Dorsolateral prefrontal cortex (tissue), 120 donors: ENCODE measurements at regions of chr16 and their contacts with region 1.

Region 1: GRCh38 chr16:72099377-72099818 is 5.8 kb downstream of the DHX38 start:
- DNase-seq: peak in 3 of 10 donors; percentile 28 to 63 (median 48)
- H3K4me3 ChIP-seq: no peak overlapping the region
- H3K27ac ChIP-seq: no peak overlapping the region
- H3K27me3 ChIP-seq: no peaks in the 10 kb centered on the region
- CTCF ChIP-seq: peak in 54 of 56 donors; percentile 22 to 77 (median 64)

Region 2: GRCh38 chr16:72066747-72067146 is 32.7 kb before region 1 on chr16:
- intact Hi-C with region 1: loop called (anchors 2 kb)
- DNase-seq: no peak
- H3K4me3 ChIP-seq: no peak overlapping the region
- H3K27ac ChIP-seq: peak overlapping the region in 4 of 59 donors; percentile 5 to 46 (median 22)
- H3K27me3 ChIP-seq: no peaks in the 10 kb centered on the region
- CTCF ChIP-seq: peak; percentile 19 to 79 (median 62)